GM12878 (cell line): ENCODE measurements at regions of chr9 and their contacts with region 1.

Region 1: DNA sequence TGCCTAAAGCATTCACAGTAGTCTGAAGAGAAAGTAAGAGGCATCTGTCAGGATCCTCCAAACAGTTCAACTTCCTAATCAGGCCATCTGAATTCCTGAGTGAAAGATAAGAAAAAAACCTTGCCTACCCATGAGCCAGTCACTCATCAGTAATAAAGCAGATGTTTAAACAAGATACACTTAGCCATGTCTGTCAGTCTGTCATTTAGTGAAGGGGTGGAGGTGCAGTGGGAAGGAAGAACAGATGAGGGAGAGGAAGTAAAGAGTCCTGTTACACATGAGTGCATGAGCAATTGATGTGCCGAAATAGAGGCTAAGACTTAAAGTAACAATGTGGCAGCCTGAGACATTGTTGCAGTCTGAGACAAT is 29.9 kb upstream of the DMRTA1 start:
- DNase-seq: no peak
- ATAC-seq: no peak
- H3K4me3 ChIP-seq: no peak overlapping the region
- H3K27ac ChIP-seq: no peak overlapping the region
- H3K4me1 ChIP-seq: no peaks in the 10 kb centered on the region
- H3K27me3 ChIP-seq: no peaks in the 10 kb centered on the region
- CTCF ChIP-seq: no peak
- EP300 ChIP-seq: no peak
- POLR2A ChIP-seq: no peak
- RAD21 ChIP-seq: no peak

Region 2: GRCh38 chr9:22316645-22317044 is 100.0 kb before region 1 on chr9:
- CTCF ChIA-PET with region 1: no interaction called
- POLR2A ChIA-PET with region 1: no interaction called
- RAD21 ChIA-PET with region 1: no interaction called
- SMC1A ChIA-PET with region 1: no interaction called
- in situ Hi-C with region 1: no loop called
- intact Hi-C with region 1: loop called (anchors 10 kb)
- DNase-seq: no peak
- ATAC-seq: no peak
- H3K4me3 ChIP-seq: no peak overlapping the region
- H3K27ac ChIP-seq: no peak overlapping the region
- H3K4me1 ChIP-seq: no peaks in the 10 kb centered on the region
- H3K27me3 ChIP-seq: no peaks in the 10 kb centered on the region
- CTCF ChIP-seq: no peak
- EP300 ChIP-seq: no peak
- POLR2A ChIP-seq: no peak
- RAD21 ChIP-seq: no peak

Region 3: DNA sequence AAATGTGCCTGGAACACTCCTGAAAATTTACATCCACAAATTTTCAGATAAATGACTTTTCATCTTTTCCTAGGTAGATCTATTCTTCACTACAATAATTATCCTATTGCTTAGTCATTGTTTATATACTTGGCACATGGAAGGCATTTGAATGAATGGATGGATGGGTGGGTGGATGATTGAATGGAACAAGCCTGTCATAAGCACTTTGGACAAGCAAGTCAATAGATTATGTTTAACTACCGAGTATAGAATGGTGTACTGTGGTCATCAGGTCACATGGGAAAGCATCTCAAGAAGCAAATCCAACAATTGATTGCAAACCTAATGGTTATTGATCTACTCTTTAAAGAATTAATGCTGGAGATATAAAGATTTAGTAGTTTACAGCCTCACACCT is 84.5 kb before region 1 on chr9:
- CTCF ChIA-PET with region 1: no interaction called
- POLR2A ChIA-PET with region 1: no interaction called
- RAD21 ChIA-PET with region 1: no interaction called
- SMC1A ChIA-PET with region 1: no interaction called
- in situ Hi-C with region 1: no loop called
- intact Hi-C with region 1: no loop called
- DNase-seq: no peak
- ATAC-seq: no peak
- H3K4me3 ChIP-seq: no peak overlapping the region
- H3K27ac ChIP-seq: no peak overlapping the region
- H3K4me1 ChIP-seq: no peaks in the 10 kb centered on the region
- H3K27me3 ChIP-seq: no peaks in the 10 kb centered on the region
- CTCF ChIP-seq: no peak
- EP300 ChIP-seq: no peak
- POLR2A ChIP-seq: no peak
- RAD21 ChIP-seq: no peak